Heart left ventricle (tissue), 16 donors: ENCODE measurements at regions of chr17 and their contacts with region 1.

Region 1: GRCh38 chr17:6753006-6753445 is 2.8 kb upstream of the XAF1 start:
- DNase-seq: peak; percentile 79 to 87 (median 81)
- ATAC-seq: peak; percentile 77 to 90 (median 79)
- H3K4me3 ChIP-seq: peak overlapping the region in 2 of 12 donors; percentile 1 to 17
- H3K27ac ChIP-seq: peak overlapping the region; percentile 76 to 97 (median 86)
- H3K4me1 ChIP-seq: peaks cover 0 to 67% (median 37%) of the 10 kb centered on the region in 12 donors
- H3K27me3 ChIP-seq: no peaks in the 10 kb centered on the region
- CTCF ChIP-seq: no peak
- POLR2A ChIP-seq: no peak

Region 2: DNA sequence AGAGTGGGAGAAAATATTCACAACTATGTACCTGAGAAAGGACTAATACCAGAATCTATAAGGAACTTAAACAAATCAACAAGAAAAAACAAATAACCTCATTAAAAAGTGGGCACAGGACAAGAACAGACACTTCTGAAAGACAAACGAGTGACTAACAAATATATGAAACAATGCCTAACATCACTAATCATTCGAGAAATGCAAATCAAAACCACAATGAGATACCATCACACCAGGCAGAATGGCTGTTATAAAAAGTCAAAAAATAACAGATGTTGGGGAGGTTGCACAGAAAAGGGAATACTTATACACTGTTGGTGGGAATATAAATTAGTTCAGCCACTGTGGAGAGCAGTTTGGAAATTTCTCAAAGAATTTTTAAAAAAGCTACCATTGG is 766.4 kb before region 1 on chr17:
- intact Hi-C with region 1: no loop called
- DNase-seq: no peak
- ATAC-seq: no peak
- H3K4me3 ChIP-seq: no peak overlapping the region
- H3K27ac ChIP-seq: no peak overlapping the region
- H3K4me1 ChIP-seq: no peaks in the 10 kb centered on the region
- H3K27me3 ChIP-seq: peaks cover 0 to 4% (median 0%) of the 10 kb centered on the region in 9 donors
- CTCF ChIP-seq: no peak
- POLR2A ChIP-seq: no peak

Region 3: DNA sequence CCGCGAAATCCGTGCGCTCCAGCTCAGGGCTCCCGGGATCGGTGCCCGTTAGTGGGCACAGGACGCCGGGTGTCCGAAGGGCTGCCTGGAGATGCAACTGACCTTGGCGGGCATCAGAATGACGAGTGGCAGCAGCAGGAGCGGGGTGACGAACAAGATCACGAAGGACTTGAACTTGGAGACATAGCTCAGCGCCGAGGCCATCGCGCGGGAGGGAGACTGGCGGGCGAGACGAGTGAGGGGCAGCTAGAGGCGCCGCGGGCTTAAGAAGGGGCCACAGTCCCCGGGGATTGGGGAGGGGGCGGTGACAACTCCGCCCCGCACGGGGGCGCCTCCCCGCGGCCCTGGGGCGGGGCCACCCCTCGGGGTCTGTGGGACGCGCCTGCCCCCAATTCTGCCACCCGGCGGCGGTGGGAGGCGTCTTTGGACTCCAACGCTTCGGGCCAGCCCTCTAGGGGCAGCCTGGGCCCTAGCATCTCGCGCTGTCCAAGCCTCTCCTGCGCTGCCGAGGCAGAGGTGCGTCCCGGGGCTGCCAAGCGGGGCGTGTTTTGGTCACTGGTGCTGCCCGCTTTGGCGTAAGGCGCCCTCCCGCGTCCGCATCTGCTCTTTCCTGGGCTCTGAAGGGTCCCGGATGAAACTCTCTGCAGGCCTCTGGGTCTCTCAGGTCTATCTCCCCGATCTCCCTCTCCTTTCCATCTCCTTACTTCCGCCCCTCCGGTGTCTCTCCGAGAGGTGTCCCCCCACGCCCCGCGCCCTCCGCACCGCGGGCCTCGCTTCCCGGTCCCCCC is 39.7 kb before region 1 on chr17 and contains the start of gene SLC13A5:
- intact Hi-C with region 1: loop called in 2 of 10 experiments (anchors 5 kb)
- DNase-seq: peak in 1 of 5 donors; percentile 17
- ATAC-seq: peak in 3 of 4 donors; percentile 69 to 77 (median 70)
- H3K4me3 ChIP-seq: peak within 1 kb of the TSS; percentile 20 to 49 (median 44)
- H3K27ac ChIP-seq: no peak within 1 kb of the TSS
- H3K4me1 ChIP-seq: peaks cover 0 to 23% (median 9%) of the 10 kb centered on the region in 12 donors
- H3K27me3 ChIP-seq: peaks cover 12 to 55% (median 29%) of the 10 kb centered on the region in 9 donors
- CTCF ChIP-seq: peak in 10 of 12 donors; percentile 12 to 49 (median 28)
- POLR2A ChIP-seq: no peak
- total RNA-seq, gene SLC13A5: 0.72 TPM in 1 of 9 donors, not detected in the others

Region 4: DNA sequence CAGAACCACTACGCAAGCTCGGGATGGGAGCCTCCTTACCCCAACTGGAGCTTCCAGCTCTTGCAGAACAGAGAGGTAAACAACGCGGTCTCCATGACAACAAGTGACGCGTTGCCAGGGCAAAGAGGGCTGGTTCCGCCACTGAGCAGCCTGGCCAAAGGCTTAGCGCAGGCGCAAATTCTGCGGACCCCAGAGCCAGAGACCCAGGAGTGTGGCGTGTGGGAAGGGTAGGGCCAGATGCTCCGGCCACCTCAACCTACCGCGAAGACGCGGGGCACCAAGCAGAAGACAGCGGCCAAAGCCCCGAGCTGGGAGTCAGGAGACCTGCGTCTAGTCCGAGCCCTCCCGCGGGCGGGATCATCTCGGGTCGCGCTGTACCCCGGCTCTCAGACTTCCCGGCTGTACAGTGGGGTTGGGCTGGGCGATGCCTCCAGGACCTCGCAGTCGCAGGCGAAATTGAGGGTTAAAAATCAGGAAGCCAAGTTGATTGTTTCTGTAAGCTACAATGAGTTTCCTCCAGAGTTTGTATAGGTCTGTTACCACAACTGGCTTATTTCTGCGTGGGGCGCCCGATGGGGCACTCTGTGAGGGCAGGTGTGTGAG is 78.7 kb after region 1 on chr17 and contains the start of gene TEKT1:
- intact Hi-C with region 1: loop called in 1 of 10 experiments (anchors 10 kb)
- DNase-seq: peak; percentile 66 to 84 (median 69)
- ATAC-seq: peak in 3 of 4 donors; percentile 81 to 94 (median 81)
- H3K4me3 ChIP-seq: peak within 1 kb of the TSS in 10 of 12 donors; percentile 5 to 49 (median 33)
- H3K27ac ChIP-seq: no peak within 1 kb of the TSS
- H3K4me1 ChIP-seq: peaks cover 0 to 11% (median 5%) of the 10 kb centered on the region in 12 donors
- H3K27me3 ChIP-seq: peaks cover 4 to 82% (median 46%) of the 10 kb centered on the region in 9 donors
- CTCF ChIP-seq: no peak
- POLR2A ChIP-seq: no peak
- total RNA-seq, gene TEKT1: not detected

Region 5: GRCh38 chr17:7004398-7005253 is 251.6 kb after region 1 on chr17:
- intact Hi-C with region 1: loop called in 1 of 10 experiments (anchors 10 kb)
- DNase-seq: no peak
- ATAC-seq: peak; percentile 16 to 81 (median 72)
- H3K4me3 ChIP-seq: no peak overlapping the region
- H3K27ac ChIP-seq: no peak overlapping the region
- H3K4me1 ChIP-seq: peaks cover 0 to 8% (median 0%) of the 10 kb centered on the region in 12 donors
- H3K27me3 ChIP-seq: no peaks in the 10 kb centered on the region
- CTCF ChIP-seq: peak; percentile 58 to 80 (median 72)
- POLR2A ChIP-seq: no peak

Region 6: DNA sequence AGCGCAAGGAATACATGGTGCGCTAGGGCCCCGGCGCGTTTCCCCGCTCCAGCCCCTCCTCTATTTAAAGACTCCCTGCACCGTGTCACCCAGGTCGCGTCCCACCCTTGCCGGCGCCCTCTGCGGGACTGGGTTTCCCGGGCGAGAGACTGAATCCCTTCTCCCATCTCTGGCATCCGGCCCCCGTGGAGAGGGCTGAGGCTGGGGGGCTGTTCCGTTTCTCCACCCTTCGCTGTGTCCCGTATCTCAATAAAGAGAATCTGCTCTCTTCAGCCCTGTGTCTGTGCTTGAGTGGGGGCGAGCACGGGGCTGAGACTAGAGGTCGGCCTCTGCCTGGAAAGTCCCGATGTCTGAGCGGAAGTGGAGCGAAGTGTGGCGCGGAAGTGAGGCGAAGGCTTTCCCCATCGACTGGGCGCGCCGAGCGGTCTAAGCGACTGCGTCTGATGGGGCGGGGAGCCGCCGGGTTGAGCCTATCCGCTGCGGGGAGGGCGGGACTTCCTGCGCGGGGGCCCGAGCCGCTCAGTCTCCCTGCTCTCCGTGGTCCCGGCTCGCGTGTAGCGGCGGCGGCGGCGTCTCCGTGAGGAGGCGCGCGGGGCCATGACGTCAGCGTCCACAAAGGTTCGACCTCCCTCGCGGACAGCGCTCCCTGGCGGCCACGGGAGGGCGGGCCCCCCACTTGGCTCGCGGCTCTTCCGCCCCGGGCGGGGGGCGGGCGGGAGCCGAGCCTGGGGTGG is 261.4 kb after region 1 on chr17:
- intact Hi-C with region 1: loop called in 3 of 10 experiments (anchors 10 kb)
- DNase-seq: peak; percentile 97 to 99 (median 99)
- ATAC-seq: peak; percentile 85 to 92 (median 89)
- H3K4me3 ChIP-seq: peak overlapping the region; percentile 75 to 99 (median 91)
- H3K27ac ChIP-seq: peak overlapping the region; percentile 89 to 99 (median 97)
- H3K4me1 ChIP-seq: peaks cover 16 to 82% (median 58%) of the 10 kb centered on the region in 12 donors
- H3K27me3 ChIP-seq: no peaks in the 10 kb centered on the region
- CTCF ChIP-seq: peak; percentile 62 to 93 (median 84)
- POLR2A ChIP-seq: peak in 1 of 2 donors; percentile 68

Region 7: GRCh38 chr17:7021993-7022778 is 269.2 kb after region 1 on chr17:
- intact Hi-C with region 1: loop called in 3 of 10 experiments (anchors 10 kb)
- DNase-seq: peak; percentile 83 to 92 (median 86)
- ATAC-seq: peak; percentile 38 to 71 (median 60)
- H3K4me3 ChIP-seq: peak overlapping the region; percentile 32 to 79 (median 62)
- H3K27ac ChIP-seq: peak overlapping the region; percentile 80 to 99 (median 96)
- H3K4me1 ChIP-seq: peaks cover 8 to 82% (median 42%) of the 10 kb centered on the region in 12 donors
- H3K27me3 ChIP-seq: peaks cover 0 to 24% (median 0%) of the 10 kb centered on the region in 9 donors
- CTCF ChIP-seq: peak; percentile 87 to 99 (median 98)
- POLR2A ChIP-seq: peak in 1 of 2 donors; percentile 52

Region 8: DNA sequence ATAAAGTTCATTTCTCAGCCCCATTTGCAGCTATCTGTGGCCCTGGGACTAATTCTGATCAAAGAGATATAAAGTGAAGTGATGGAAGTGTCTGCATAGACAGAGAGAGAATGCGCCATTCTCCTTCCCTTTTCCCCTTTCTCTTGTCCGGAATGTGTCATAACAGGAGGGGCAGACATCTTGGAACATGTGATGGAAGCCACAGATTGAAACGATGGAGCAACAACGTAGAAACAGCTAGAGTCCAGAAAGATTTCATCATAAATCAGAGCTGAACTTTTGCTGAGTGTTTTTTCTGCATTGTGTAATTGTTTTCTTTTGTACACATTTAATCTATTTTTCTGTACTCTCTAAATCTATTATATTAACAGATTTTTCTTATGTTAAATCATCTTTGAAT is 414.8 kb after region 1 on chr17:
- intact Hi-C with region 1: no loop called
- DNase-seq: no peak
- ATAC-seq: no peak
- H3K4me3 ChIP-seq: no peak overlapping the region
- H3K27ac ChIP-seq: peak overlapping the region in 1 of 12 donors; percentile 77
- H3K4me1 ChIP-seq: peaks cover 0 to 27% (median 0%) of the 10 kb centered on the region in 12 donors
- H3K27me3 ChIP-seq: peaks cover 0 to 7% (median 0%) of the 10 kb centered on the region in 9 donors
- CTCF ChIP-seq: no peak
- POLR2A ChIP-seq: no peak